Prostate gland (tissue), 2 donors: ENCODE measurements at regions of chr19 and their contacts with region 1.

Region 1: GRCh38 chr19:14769201-14769600 is 9.2 kb downstream of the ADGRE2 start:
- DNase-seq: no peak
- H3K4me3 ChIP-seq: no peak overlapping the region
- H3K27ac ChIP-seq: no peak overlapping the region
- H3K4me1 ChIP-seq: no peaks in the 10 kb centered on the region
- H3K27me3 ChIP-seq: no peaks in the 10 kb centered on the region
- CTCF ChIP-seq: no peak
- POLR2A ChIP-seq: no peak

Region 2: DNA sequence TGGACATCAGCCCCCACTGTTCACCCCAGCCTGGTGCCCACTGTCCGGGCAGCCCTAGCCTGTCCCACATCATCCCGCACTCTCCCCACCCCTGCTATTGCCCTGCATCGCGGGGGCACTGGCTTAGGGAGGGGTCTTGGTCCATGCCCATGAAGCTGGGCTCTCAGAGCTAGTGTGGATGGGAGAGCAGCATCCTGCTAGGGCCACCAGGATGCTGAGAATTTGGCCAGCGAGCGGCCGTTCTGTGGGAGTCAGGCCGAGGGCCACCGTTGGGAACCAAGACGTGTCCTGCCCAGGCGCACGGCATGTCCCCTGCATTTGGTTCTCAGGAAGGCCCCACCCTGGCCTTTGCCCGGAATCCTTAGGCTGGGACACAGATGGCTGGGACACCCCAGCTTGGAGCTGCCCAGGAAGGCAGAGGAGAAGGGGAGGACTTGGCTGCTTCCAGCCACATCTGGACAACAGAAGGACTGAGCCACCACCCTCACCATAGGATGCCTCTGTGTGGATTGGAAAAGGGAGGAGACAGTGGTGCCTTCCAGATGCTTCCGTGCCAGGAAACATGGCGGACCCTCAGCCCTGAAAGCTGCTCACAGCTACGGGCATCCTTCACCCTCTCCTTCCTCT is 373.4 kb before region 1 on chr19:
- intact Hi-C with region 1: loop called (anchors 10 kb)
- DNase-seq: no peak
- H3K4me3 ChIP-seq: no peak overlapping the region
- H3K27ac ChIP-seq: no peak overlapping the region
- H3K4me1 ChIP-seq: no peaks in the 10 kb centered on the region
- H3K27me3 ChIP-seq: no peaks in the 10 kb centered on the region
- CTCF ChIP-seq: no peak
- POLR2A ChIP-seq: no peak

Region 3: GRCh38 chr19:14699641-14700040 is 69.6 kb before region 1 on chr19:
- intact Hi-C with region 1: no loop called
- DNase-seq: no peak
- H3K4me3 ChIP-seq: no peak overlapping the region
- H3K27ac ChIP-seq: no peak overlapping the region
- H3K4me1 ChIP-seq: no peaks in the 10 kb centered on the region
- H3K27me3 ChIP-seq: no peaks in the 10 kb centered on the region
- CTCF ChIP-seq: no peak
- POLR2A ChIP-seq: no peak

Region 4: GRCh38 chr19:14731200-14731599 is 38.0 kb before region 1 on chr19:
- intact Hi-C with region 1: no loop called
- DNase-seq: no peak
- H3K4me3 ChIP-seq: no peak overlapping the region
- H3K27ac ChIP-seq: no peak overlapping the region
- H3K4me1 ChIP-seq: no peaks in the 10 kb centered on the region
- H3K27me3 ChIP-seq: no peaks in the 10 kb centered on the region
- CTCF ChIP-seq: no peak
- POLR2A ChIP-seq: no peak

Region 5: GRCh38 chr19:14835041-14835453 is 65.8 kb after region 1 on chr19 and contains the starts of genes OR7A5 and OR7C1:
- intact Hi-C with region 1: no loop called
- DNase-seq: peak; percentile 64
- H3K4me3 ChIP-seq: peak within 1 kb of the TSS; percentile 4 to 6
- H3K27ac ChIP-seq: peak within 1 kb of the TSS; percentile 59 to 62
- H3K4me1 ChIP-seq: peaks cover 7% of the 10 kb centered on the region
- H3K27me3 ChIP-seq: no peaks in the 10 kb centered on the region
- CTCF ChIP-seq: no peak
- POLR2A ChIP-seq: no peak
- total RNA-seq, gene OR7A5: 0.57 to 1.4 TPM
- total RNA-seq, gene OR7C1: 3.2 to 5.1 TPM